ENCODE measurements at regions of chr12 and their contacts with region 1.

Region 1: DNA sequence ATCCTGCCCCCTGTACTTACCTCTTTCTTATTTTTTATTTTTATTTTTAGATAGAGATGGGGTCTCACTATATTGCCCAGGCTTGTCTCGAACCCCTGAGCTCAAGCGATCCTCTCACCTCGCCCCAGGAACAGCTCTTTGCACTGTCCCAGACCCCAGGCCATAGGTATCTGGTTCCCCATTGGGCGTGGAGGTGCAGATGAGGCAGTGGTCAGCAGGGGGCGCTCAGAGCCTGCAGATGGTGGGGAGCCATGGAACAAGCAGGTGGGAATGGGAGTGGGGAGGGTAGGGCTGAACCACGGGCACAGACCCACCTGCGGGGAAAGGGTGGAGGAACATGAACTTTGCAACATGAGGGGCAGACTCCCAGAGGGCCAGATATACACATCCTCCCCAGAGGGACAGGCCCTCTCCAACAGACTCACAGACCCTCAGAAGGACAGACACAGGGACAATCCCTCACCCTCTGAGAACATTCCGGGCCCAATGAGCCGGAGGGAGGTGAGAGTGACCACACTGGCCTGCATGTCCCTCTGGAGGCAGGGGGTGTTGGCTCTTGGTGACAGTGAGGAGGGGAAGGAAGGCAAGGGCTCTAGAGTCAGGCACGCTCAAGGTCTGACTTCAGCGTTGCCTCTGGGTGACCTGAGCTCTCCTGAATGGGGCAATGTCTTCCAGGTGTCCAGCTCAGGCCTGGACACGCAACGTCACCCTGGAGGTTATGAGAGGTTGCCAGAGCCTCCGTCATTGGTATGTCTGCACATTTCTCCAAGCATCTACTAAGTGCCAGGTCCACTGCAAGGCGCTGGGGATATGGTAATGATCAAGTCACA is 34.9 kb downstream of the KRT80 start:
- DNase-seq: peak; percentile 95
- H3K4me3 ChIP-seq: no peak overlapping the region
- H3K27ac ChIP-seq: no peak overlapping the region
- H3K4me1 ChIP-seq: peaks cover 10 to 24% (median 18%) of the 10 kb centered on the region in 4 donors
- H3K27me3 ChIP-seq: no peaks in the 10 kb centered on the region
- CTCF ChIP-seq: peak in 2 of 3 experiments; percentile 86 to 96
- EP300 ChIP-seq: no peak
- POLR2A ChIP-seq: no peak

Region 2: DNA sequence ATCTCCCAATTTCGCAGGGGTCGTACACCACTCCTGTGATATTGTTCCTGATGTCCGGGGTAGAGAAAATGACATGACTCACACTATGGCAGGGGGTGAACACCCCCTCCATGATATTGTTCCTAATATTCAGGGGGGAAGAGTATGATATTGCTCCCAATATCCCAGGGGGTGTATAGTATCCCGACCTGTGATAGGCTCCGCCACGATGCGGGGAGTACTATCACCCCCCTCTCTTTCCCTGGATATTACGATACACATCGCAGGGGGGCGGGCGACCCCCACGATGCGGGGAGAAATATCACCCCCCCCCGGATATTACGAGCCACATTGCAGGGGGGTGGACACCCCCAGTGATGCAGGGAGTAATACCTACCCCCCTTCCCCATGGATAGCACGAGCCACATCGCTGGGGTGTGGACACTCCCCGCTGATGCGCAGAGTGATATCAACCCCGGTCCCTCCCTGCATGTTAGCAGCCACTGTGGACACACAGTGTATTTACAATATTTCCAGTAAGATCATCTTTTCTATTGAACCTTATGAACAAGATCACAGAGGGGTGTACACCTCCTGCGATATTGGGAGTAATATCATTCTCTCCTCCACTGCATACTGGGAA is 59.8 kb before region 1 on chr12:
- intact Hi-C with region 1: no loop called
- DNase-seq: no peak
- H3K4me3 ChIP-seq: no peak overlapping the region
- H3K27ac ChIP-seq: no peak overlapping the region
- H3K4me1 ChIP-seq: no peaks in the 10 kb centered on the region
- H3K27me3 ChIP-seq: peaks cover 0 to 40% (median 0%) of the 10 kb centered on the region in 4 donors
- CTCF ChIP-seq: no peak
- EP300 ChIP-seq: no peak
- POLR2A ChIP-seq: no peak

Region 3: DNA sequence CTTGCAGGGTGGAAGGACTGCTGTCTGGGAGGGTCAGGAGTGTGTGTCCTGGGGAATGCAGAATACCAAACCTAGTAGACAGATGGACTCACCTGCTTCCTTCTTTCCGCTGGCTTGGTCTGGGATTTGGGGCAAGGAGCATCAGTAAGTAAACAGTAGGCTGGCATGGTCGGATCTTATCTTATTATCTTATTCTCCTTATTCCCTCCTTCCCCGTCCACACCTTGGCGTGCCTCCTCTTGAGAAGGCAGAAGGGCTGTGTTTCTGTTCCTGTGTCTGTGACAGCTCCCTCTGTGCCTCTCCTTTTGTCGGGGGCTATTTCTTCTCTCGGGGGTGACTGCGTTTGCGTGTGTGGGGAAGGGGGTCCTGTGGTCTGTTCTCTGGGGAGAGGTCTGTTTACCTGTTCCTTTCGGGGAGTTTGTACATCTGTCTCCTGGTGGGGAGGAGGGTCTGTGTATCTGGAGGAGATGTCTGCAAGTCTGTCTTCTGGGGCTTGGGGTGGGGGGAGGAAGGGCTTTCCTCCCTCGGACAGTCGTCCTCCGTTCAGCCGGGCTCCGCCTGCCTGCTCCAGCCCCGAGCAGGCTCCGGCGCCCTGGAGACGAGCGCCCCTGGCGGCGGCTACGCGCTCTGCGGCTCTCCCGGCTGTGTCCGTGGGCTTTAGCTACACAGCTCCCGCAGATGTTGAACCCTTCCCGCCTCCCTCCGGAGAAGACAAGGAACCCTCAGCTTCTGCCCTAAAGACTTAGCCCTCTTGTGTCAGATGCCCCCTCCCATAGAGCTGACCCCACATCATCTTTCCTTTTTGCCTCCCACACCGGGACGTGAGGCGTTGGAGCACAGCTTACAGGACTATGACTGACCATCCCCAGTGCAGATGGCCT is 121.8 kb after region 1 on chr12:
- intact Hi-C with region 1: loop called (anchors 5 kb)
- DNase-seq: peak; percentile 95
- H3K4me3 ChIP-seq: peak overlapping the region; percentile 38 to 54 (median 47)
- H3K27ac ChIP-seq: peak overlapping the region; percentile 86 to 92 (median 90)
- H3K4me1 ChIP-seq: peaks cover 29 to 42% (median 37%) of the 10 kb centered on the region in 4 donors
- H3K27me3 ChIP-seq: no peaks in the 10 kb centered on the region
- CTCF ChIP-seq: peak; percentile 94 to 97 (median 95)
- EP300 ChIP-seq: no peak
- POLR2A ChIP-seq: no peak

Region 4: GRCh38 chr12:52327052-52327829 is 170.3 kb after region 1 on chr12:
- intact Hi-C with region 1: loop called (anchors 2 kb)
- DNase-seq: no peak
- H3K4me3 ChIP-seq: no peak overlapping the region
- H3K27ac ChIP-seq: no peak overlapping the region
- H3K4me1 ChIP-seq: peaks cover 0 to 7% (median 2%) of the 10 kb centered on the region in 4 donors
- H3K27me3 ChIP-seq: no peaks in the 10 kb centered on the region
- CTCF ChIP-seq: peak; percentile 77 to 89 (median 79)
- EP300 ChIP-seq: no peak
- POLR2A ChIP-seq: no peak

Region 5: GRCh38 chr12:52582971-52583456 is 426.1 kb after region 1 on chr12:
- intact Hi-C with region 1: loop called (anchors 10 kb)
- DNase-seq: no peak
- H3K4me3 ChIP-seq: no peak overlapping the region
- H3K27ac ChIP-seq: no peak overlapping the region
- H3K4me1 ChIP-seq: no peaks in the 10 kb centered on the region
- H3K27me3 ChIP-seq: peaks cover 0 to 7% (median 0%) of the 10 kb centered on the region in 4 donors
- CTCF ChIP-seq: peak; percentile 71 to 84 (median 71)
- EP300 ChIP-seq: no peak
- POLR2A ChIP-seq: no peak

Region 6: DNA sequence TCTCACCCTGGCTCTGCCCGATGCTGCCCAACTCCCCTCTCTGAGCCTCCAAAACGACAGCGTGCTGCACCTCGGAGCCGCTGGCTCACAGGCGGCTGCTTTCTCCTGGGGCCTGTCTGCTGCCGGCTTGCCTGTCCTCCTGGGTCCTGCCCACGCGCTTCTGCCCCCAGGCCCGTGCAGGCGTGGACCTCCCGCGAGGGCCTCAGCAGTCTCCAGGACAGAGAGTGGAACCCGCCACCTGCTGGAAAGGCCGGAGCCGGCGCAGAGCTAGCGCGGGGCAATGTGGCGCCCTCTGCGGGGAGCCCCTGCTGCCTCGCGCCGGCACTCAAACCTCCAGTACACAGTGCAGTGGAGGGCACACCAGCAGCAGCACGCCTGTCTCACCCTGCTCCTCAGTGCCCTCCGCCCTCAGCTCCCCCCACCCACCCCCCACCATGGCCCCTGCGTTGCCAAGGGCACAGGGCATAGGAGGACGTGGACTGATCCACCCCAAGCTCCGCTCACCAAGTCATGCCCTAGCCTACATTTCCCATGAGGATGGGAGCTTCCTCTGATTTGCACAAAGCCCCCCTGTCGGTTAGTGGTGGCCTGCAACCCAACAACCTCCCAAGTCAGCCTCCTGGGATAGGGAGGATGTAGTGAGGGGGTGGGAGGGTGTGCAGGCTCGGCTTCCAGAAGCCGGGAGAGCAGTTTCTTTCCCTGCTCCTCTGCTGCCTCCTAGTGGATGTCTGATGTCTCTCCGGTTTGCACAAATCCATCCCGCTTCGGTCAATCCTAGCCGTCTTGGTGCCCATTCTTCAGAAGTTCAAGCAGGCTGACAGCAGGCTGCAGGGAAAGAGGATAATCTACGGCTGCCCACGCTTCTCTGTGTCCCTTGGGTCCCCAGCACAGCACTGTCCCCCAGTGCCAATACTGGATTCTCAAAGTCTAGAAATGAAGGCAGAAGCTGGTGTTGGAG is 722.7 kb after region 1 on chr12:
- intact Hi-C with region 1: loop called (anchors 2 kb)
- DNase-seq: no peak
- H3K4me3 ChIP-seq: peak overlapping the region; percentile 40 to 53 (median 42)
- H3K27ac ChIP-seq: peak overlapping the region in 3 of 4 donors; percentile 14 to 34 (median 17)
- H3K4me1 ChIP-seq: peaks cover 10 to 25% (median 20%) of the 10 kb centered on the region in 4 donors
- H3K27me3 ChIP-seq: peaks cover 0 to 16% (median 0%) of the 10 kb centered on the region in 4 donors
- CTCF ChIP-seq: peak; percentile 60 to 81 (median 67)
- EP300 ChIP-seq: no peak
- POLR2A ChIP-seq: no peak

Measured in esophagus muscularis mucosa (tissue), 4 donors.